Sciatic nerve (tissue), 2 donors: ENCODE measurements at regions of chr6 and their contacts with region 1.

Region 1: GRCh38 chr6:19452495-19452894 is 384.7 kb upstream of the ID4 start:
- DNase-seq: no peak
- ATAC-seq: no peak

Region 2: DNA sequence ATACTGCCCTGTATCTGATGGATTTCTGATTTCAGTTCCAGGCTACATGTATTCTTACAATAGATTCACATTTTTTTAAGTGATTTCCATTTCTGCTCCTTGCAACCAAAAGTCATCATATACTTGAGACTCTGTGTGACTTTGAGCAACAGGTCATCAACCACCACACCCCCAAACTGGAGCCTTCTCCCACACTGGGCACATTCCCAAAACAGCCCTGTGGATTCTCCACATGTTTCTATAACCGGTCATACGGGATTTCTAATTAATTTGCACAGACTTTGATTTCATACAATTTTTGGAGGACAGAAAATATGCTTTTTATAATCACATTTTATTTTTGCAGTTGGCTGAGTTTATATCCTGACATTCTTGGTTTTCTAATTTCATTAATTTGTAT is 67.4 kb after region 1 on chr6:
- intact Hi-C with region 1: loop called (anchors 2 kb)
- DNase-seq: no peak
- ATAC-seq: no peak